ENCODE measurements at regions of chr2 and their contacts with region 1.

Region 1: GRCh38 chr2:67840460-67841068 is 222.2 kb downstream of the C1D start:
- DNase-seq: peak; percentile 70
- ATAC-seq: peak; percentile 96

Region 2: GRCh38 chr2:66574701-66575624 is 1265.6 kb before region 1 on chr2:
- intact Hi-C with region 1: loop called (anchors 5 kb)
- DNase-seq: no peak
- ATAC-seq: peak; percentile 73

Region 3: DNA sequence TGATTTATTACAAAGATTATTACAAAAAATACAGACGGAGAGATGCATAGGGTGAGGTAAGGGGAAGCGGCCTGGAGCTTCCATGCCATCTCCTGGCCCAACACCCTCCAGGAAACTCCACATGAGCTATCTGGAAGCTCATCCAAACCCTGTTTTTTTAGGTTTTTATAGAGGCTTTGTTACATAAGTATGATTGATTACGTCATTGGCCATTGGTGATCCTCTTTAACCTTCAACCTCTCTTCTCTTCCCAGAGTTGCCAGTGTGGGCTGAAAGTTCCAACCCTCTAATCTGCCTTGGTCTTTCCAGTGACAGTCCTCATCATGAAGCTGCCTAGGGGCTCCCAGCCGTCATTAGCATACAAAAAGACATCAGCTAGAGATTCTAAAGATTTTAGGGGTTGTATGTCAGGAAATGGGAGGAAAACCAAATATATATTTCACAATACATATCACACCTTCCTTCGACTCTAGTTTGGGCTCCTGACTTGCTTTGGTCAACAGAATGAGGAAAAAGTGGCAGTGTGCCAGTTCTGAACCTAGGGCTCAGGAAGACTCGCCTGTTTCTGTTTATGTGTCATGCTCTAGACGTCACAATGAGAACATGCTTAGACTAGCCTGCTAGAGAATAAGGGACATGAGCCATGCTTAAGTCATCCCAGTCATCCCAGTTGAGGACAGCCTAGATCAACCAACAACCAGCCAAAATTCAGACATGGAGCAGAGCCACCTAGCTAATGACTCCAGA is 389.3 kb before region 1 on chr2:
- intact Hi-C with region 1: loop called (anchors 10 kb)
- DNase-seq: no peak
- ATAC-seq: no peak

Region 4: DNA sequence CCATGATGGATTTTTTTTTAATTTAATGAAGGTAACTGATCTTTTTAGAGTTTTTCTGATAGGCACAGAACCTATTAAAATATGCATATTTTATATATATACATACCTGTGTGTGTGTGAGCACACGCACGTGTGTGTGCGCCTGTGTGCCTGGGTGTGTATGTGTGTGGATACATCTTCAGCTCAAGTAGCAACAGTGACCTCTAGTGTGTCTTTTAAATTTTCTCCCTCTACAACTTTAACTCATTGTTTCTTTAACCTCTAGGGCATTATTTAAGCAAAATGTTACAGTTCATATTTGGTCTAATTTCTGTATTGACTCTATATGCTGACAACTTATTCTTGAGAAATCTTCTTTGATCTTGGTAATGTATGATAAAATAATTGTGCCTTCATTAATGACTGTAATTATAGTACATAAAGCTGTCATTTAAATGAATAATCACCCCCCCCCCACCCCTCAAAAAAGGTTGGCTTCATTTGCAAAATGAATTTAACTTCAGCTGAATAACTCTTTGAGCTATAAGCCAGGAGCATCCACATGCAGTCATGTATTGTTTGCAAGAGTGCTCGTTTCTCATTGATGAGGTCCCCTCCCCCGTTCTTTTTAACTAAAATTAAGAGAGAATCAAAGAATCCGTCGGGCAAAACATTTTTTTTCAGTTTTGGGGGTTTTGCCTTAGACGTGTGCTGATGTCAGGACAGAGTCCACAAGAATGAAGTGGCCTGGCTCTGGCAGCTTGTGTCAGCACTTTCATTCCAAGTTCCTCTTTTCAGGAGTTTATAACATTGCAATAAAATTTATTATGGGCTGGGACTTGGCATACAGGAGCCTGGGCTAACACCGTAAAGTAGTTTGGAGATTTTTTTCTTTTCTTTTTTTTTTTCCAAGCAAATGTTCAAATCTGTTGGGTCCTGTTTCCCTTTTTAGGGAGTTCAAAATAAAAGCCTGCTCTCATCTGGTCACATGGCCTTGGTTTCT is 363.5 kb before region 1 on chr2:
- intact Hi-C with region 1: loop called (anchors 5 kb)
- DNase-seq: no peak
- ATAC-seq: peak; percentile 76

Region 5: DNA sequence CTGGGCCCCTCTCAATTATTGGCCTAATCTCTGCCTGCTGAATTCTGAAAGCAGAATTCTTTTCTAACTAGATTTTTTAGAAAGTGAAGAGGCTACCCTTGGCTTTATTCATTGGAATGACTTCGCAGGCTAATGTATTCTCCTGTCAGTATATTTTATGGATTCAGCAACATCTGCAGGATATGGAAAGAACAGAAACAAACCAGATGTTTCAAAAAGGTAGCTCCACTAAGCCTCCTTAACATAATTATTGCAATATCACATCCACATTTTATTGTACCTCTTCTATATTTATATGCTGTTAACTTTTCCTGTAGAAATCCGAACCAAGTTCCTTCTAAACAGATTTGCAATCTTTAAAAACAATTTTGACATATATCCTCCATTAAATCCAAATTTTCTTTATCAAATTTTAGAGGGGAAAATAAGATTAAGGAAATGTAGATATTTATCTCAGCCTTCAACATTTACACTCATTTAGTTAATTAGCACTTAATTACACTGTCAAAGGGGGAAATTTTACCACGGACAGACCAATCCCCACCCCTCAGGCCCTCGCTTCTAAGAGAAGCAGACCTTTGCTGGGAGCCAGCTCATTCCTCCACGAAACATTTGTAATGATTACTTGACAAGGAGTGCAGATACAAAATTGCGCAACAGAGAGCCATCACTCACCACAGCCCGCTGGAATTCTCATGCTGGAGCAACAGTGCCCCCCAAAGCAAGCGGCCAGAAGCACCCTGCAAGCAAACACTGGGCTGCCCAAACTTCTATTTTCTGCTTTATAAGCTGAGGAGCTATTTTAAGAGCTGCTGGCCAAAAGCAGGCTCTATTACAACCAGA is 190.1 kb before region 1 on chr2:
- intact Hi-C with region 1: loop called (anchors 2 kb)
- DNase-seq: peak; percentile 76
- ATAC-seq: peak; percentile 88

Region 6: DNA sequence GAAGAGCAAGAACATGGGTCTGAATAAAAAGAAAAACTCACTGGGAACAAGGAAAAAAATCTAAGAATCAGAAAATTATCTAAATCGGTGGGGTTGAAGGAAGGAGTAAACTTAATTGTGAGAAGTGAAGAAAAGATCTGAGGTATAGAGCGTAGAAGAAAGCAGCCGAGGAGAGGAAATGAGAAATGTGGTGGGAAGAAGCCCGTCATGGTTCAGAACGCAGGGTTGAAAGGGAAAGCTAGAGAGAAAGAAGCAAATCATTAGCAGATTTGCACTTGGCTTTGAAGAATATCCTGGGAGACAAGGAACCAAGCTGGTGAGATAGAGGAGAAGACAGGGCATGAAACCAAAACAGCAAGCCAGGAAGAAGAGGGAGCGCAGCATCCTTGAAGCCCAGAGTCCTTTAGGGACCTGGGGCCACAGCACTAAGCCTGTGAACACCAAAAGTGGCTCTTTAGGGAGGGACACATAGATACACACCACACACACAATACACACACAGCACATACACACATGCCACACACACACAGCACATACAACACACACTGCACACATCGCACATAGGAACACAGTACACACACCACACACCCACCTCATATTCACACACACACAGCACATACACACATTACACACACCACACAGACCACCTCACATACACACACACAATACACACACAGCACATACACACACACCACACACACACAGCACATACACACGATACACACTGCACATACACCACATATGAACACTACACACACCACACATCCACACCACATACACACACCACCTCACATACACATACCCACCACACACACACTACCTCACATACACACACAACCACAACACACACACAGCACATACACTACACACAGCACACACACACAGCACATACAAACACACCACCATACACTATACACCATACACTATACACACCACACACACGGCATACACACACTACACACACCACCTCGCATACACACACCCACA is 168.8 kb before region 1 on chr2:
- intact Hi-C with region 1: loop called (anchors 5 kb)
- DNase-seq: no peak
- ATAC-seq: no peak

Region 7: DNA sequence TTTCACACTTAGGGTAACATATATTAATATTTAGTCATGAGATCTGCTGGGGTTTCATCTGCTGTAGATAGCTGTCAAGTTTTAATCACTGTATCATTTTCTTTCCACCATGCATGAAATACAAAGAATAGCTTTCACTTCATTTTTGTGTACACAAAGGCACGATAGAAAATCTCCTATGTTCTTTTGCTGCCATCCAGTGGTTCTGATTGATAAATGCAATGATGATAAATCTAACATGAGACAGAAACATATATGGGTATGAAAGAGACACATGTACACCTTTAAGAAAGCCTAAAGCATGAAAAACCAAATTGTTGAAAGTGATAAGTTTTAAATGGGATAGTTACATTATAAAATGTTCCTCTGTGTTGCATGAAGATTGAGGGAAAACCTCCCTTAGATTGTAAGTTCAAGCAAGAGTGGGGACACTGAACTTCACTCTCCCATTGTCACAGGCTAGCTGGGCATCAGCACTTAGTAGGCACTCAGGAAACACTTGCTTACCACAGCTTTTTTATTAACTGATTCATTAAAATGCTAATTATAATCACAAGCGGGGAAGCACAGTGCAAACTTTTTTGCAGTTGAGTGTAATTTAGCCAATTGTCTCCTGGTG is 191.1 kb after region 1 on chr2:
- intact Hi-C with region 1: loop called (anchors 10 kb)
- DNase-seq: no peak
- ATAC-seq: no peak

Measured in Right ventricle myocardium inferior (tissue), 1 donor.